Activated CD4-positive, alpha-beta T cell treated with anti-CD3 and anti-CD28 coated beads, Interleukin-2, amount 10 ng/mL, durations not matched to agents 24 days and 14 days (primary cell): ENCODE measurements at regions of chr22 and their contacts with region 1.

Region 1: DNA sequence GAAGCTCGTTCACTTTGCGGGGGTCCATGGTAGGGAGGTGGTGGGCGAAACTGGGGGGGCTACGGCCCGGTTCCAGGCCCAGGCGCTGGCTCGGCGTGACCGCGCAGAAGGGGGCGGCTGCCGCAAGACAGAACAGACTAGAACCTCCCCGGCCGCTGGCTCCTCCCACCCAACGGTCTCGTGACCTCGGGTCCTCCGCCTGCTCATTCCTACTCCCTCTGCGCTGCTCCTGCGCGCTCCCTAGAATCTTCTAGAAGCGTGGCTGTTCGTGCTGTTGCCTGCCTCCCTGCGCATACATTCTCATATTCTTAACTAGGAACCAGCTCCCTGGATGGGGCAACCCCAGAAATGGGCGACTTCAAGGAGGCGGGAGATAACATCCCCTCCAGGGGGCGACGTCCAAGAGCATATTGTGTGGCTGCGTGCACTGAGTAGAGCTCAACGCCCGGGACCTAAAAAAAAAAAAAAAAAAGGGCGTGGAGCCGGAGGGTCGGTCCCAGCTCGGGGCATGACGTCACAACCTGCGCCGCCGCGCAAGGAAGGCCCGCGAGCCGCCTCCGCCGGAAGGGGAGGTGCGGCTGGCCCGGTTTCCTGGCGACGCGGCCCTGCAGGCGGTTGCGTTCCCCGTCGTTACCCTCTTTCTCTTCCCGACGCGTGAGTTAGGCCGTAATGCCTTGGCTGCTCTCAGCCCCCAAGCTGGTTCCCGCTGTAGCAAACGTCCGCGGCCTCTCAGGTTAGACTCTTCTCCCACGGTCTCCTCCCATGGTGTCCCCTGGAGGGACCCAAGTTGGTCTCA is at the starts of genes ST13 and XPNPEP3:
- DNase-seq: peak; percentile 99
- H3K4me3 Mint-ChIP-seq: peak within 1 kb of the TSS; percentile 96
- H3K27ac Mint-ChIP-seq: peak within 1 kb of the TSS; percentile 100
- H3K4me1 Mint-ChIP-seq: peaks cover 42% of the 10 kb centered on the region
- H3K27me3 Mint-ChIP-seq: peaks cover 2% of the 10 kb centered on the region
- total RNA-seq, gene ST13: 210 and 215 TPM in 2 replicates
- total RNA-seq, gene XPNPEP3: 17.6 and 17.7 TPM in 2 replicates

Region 2: DNA sequence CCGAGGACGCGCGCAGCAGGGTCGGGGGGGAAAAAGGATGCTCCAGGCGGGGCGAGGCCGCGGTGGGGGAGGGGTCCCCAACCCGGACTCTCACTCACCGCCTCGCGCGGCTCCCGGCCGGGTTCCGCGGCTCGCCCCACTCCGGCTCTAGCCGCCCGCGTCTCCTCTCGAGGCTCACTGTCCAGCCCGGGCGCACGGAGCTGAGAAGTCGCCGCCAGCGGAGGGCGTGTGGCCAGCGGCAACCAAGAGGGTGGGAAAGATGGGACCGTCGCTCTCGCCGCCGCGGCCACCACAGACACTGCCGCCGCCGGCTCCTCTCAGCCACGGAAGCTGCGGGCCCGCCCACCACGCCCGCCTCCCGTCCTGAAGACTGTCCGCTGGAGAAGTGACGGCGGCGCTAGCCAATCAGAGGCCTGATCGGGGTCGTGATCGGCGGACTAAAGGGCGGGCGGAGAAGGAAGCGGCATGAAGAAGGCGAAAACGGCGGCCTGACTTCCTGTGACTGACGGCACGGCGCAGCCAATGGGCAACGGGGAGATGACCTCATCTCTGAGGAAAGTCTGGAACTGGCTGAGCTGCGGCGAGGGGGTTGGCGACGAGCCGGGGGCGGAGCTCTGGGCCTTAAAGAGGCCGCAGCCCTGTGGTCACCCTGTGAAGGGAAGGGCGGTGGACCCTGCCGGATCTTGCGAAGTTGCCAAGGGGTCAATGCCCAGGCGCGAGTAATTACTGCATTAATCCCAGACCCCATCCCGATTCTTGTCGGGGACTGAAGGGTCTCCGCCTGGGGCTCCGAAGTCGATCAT is 220.1 kb before region 1 on chr22 and contains the start of gene MRTFA:
- intact Hi-C with region 1: loop called (anchors 1 kb)
- DNase-seq: peak; percentile 100
- H3K4me3 Mint-ChIP-seq: peak within 1 kb of the TSS; percentile 91
- H3K27ac Mint-ChIP-seq: peak within 1 kb of the TSS; percentile 95
- H3K4me1 Mint-ChIP-seq: peaks cover 32% of the 10 kb centered on the region
- H3K27me3 Mint-ChIP-seq: no peaks in the 10 kb centered on the region
- total RNA-seq, gene MRTFA: 51.7 and 51.9 TPM in 2 replicates

Region 3: DNA sequence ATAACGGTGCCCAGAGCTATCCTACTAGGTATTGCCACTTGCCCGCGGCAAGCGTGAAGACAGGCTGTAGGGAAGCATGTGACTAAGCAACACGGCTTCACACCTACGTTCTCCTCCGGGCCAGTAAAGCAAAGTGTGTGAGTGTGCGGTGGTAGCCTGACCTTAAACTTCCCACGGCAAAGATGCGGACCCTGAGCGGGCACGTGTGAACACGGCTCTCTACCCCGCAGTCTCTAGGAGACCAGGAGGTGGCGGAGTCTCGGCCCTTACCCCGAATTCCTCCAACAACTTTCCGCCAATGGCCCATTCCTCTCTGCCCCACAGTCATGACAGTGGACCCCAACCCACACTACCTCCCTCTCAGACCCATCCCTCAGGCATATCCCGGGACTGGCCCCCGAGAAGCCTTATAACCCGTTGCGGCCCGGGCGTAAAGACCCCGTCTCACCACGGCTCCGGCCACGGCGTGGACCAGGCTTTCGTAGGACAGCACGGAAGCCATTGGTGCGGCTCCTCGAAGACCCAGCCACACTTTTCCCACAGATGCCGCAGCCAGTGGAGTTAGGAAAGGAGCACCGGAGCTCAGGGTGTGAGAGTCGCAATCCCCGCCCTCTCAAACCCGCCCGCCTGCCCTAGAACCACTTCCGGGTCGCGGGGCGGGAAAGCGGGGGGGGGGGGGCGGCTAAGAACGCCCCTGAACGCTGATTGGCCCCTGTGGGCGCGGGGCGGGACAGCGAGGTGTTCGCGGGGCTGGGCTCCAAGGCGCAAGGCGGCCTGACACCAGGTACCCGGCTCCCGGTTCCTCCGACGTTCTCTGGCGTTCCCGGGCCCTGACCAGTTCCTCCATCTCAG is 37.7 kb before region 1 on chr22 and contains the start of gene SLC25A17:
- intact Hi-C with region 1: loop called (anchors 1 kb)
- DNase-seq: peak; percentile 96
- H3K4me3 Mint-ChIP-seq: peak within 1 kb of the TSS; percentile 92
- H3K27ac Mint-ChIP-seq: peak within 1 kb of the TSS; percentile 94
- H3K4me1 Mint-ChIP-seq: peaks cover 30% of the 10 kb centered on the region
- H3K27me3 Mint-ChIP-seq: no peaks in the 10 kb centered on the region
- total RNA-seq, gene SLC25A17: 32.8 and 37.7 TPM in 2 replicates

Region 4: DNA sequence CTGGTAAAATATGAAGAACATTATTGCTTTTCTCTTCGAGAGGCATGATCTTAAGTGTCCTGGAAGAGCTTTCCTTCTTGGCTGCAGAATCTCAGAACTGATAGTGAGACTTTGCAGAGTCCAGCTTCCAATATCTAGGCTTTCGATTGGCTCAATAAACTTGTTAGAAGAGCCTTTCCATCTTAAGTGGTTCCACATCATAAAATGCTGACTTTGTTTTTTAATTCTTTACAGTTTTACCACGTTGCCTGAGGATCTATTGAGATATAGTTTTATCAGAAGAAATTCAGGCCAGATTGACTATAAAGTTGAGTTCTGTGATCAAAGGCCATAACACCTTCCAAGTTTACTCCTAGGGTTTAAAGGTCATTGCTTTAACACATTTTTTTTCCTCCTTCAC is 20.8 kb after region 1 on chr22:
- intact Hi-C with region 1: no loop called
- DNase-seq: no peak
- H3K4me3 Mint-ChIP-seq: no peak overlapping the region
- H3K27ac Mint-ChIP-seq: no peak overlapping the region
- H3K4me1 Mint-ChIP-seq: no peaks in the 10 kb centered on the region
- H3K27me3 Mint-ChIP-seq: no peaks in the 10 kb centered on the region

Region 5: GRCh38 chr22:41204992-41205900 is 348.5 kb after region 1 on chr22 and contains the start of gene L3MBTL2:
- intact Hi-C with region 1: loop called (anchors 2 kb)
- DNase-seq: peak; percentile 100
- H3K4me3 Mint-ChIP-seq: peak within 1 kb of the TSS; percentile 94
- H3K27ac Mint-ChIP-seq: peak within 1 kb of the TSS; percentile 94
- H3K4me1 Mint-ChIP-seq: peaks cover 20% of the 10 kb centered on the region
- H3K27me3 Mint-ChIP-seq: peaks cover 19% of the 10 kb centered on the region
- total RNA-seq, gene L3MBTL2: 53.3 and 55.0 TPM in 2 replicates